Right ventricle myocardium inferior (tissue), 1 donor: ENCODE measurements at regions of chr3 and their contacts with region 1.

Region 1: DNA sequence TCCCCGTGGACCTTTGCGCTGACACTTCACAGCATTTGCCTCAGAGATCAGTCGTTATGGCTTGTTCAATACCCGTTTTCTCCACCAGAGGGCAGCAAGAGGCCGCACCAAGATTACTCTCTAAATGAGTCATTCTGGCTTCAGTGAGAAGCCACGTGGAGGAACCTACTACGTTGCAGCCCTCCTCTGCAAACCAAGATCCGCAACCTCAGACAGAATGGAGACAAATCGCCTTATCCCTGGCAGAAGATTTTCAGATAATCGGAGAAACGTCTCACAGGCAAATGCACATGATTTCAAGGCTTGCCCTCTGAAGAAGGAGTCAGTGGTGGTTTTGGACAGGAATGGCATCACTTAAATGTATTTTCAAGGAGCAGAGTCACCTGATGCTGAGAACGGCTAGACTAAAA is 60.5 kb downstream of the GTPBP8 start:
- DNase-seq: peak; percentile 64
- ATAC-seq: peak; percentile 94

Region 2: DNA sequence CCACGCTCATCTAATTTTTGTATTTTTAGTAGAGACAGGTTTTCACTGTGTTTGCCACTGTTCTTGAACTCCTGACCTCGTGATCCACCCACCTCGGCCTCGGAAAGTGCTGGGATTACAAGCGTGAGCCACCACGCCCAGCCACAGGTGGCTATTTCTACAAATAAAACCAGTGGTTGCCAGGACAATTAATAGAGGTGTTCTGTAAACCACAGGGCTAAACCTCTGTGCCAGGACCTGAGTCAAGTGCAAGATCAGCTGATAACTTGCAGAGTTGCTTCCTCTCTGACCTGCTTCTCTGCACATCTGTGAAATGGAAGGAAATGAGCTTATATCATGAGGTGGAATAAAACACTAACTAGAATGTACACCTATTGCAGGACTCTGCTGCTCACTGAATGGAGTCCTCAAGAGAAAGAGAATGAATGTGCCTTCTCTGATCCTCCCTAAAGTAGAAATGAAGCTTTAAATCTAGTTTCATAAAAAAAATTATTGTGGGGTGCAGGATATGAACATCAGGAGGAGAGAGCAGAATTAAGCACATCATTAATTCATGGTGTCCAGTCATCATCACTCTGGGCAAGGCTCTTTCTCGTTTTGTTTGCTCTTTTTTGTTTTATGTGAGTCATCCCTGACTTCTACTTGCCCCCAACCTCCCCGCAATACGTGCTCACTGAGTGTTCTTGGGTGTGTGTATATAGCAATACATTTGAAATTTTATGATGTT is 277.3 kb before region 1 on chr3:
- intact Hi-C with region 1: no loop called
- DNase-seq: no peak
- ATAC-seq: no peak

Region 3: GRCh38 chr3:113136071-113136470 is 84.8 kb after region 1 on chr3:
- intact Hi-C with region 1: loop called (anchors 2 kb)
- DNase-seq: no peak
- ATAC-seq: no peak

Region 4: DNA sequence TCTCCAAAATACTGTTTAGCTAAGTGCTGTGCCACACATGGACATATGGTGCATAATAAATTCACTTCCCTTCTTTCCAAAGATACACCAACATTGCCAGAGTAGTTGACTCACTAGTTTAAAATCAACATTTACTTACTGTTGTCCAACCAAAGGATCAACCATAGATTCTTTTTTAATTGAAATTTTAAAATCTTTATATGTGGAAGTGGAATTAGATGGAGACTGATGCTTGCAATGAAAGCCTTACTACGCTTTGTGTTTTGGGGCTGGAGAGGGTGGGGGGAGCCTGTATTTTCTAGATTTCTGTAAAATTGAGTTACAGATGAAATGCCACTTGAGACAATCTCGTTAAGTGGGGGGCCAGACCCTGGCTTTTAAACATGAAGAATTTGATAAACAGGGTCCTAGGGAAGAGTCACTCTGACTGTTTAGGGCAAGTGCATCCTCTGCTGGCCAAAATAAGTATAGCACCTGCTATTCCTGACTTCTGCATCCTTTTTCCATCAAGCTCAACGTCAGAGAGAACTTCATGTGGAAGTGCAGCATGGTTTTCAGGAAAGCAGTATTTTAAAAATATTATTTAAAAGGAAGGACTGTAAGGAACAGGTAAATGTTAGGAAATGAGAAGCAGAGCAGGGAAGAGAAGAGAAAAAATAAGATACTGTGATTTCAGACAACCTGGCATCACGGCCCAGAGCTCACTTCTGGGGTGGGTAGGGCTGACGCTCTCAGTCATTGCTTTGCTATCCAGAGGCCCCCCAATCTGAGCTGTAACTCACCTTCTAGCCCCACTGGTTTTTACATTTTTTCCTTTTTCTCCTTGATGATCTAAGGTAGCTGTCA is 236.7 kb after region 1 on chr3:
- intact Hi-C with region 1: loop called (anchors 1 kb)
- DNase-seq: no peak
- ATAC-seq: peak; percentile 45

Region 5: GRCh38 chr3:113626503-113627371 is 575.4 kb after region 1 on chr3:
- intact Hi-C with region 1: loop called (anchors 5 kb)
- DNase-seq: peak; percentile 81
- ATAC-seq: peak; percentile 94